Activated T-helper 1 cell treated with anti-CD3 and anti-CD28 coated beads, Interleukin-12 subunit alpha, Interleukin-12 subunit beta, Interleukin-2, Interleukin-4 antibody, amounts not matched to agents 30 ng/mL and 10 ng/mL and 1 ng/mL, durations not matched to agents 14 hours and 24 hours and 36 hours (primary cell): ENCODE measurements at regions of chr7 and their contacts with region 1.

Region 1: GRCh38 chr7:3042861-3043489 is 692 bp downstream of the CARD11 start:
- DNase-seq: peak; percentile 65
- H3K4me3 Mint-ChIP-seq: peak overlapping the region; percentile 97
- H3K27ac Mint-ChIP-seq: peak overlapping the region; percentile 95
- H3K4me1 Mint-ChIP-seq: peaks cover 47% of the 10 kb centered on the region
- H3K27me3 Mint-ChIP-seq: no peaks in the 10 kb centered on the region

Region 2: GRCh38 chr7:2894118-2894940 is 148.6 kb before region 1 on chr7:
- intact Hi-C with region 1: loop called (anchors 2 kb)
- DNase-seq: peak; percentile 43
- H3K4me3 Mint-ChIP-seq: peak overlapping the region; percentile 87
- H3K27ac Mint-ChIP-seq: peak overlapping the region; percentile 99
- H3K4me1 Mint-ChIP-seq: peaks cover 37% of the 10 kb centered on the region
- H3K27me3 Mint-ChIP-seq: peaks cover 1% of the 10 kb centered on the region

Region 3: GRCh38 chr7:3028071-3028757 is 14.8 kb before region 1 on chr7:
- intact Hi-C with region 1: loop called (anchors 2 kb)
- DNase-seq: peak; percentile 8
- H3K4me3 Mint-ChIP-seq: peak overlapping the region; percentile 60
- H3K27ac Mint-ChIP-seq: peak overlapping the region; percentile 92
- H3K4me1 Mint-ChIP-seq: peaks cover 60% of the 10 kb centered on the region
- H3K27me3 Mint-ChIP-seq: no peaks in the 10 kb centered on the region

Region 4: GRCh38 chr7:3092468-3092867 is 49.5 kb after region 1 on chr7:
- intact Hi-C with region 1: loop called (anchors 2 kb)
- DNase-seq: peak; percentile 74
- H3K4me3 Mint-ChIP-seq: peak overlapping the region; percentile 15
- H3K27ac Mint-ChIP-seq: peak overlapping the region; percentile 94
- H3K4me1 Mint-ChIP-seq: peaks cover 56% of the 10 kb centered on the region
- H3K27me3 Mint-ChIP-seq: no peaks in the 10 kb centered on the region

Region 5: GRCh38 chr7:4169455-4169854 is 1126.5 kb after region 1 on chr7:
- intact Hi-C with region 1: no loop called
- DNase-seq: no peak
- H3K4me3 Mint-ChIP-seq: no peak overlapping the region
- H3K27ac Mint-ChIP-seq: no peak overlapping the region
- H3K4me1 Mint-ChIP-seq: no peaks in the 10 kb centered on the region
- H3K27me3 Mint-ChIP-seq: no peaks in the 10 kb centered on the region